ENCODE measurements at regions of chr19 and their contacts with region 1.

Region 1: GRCh38 chr19:18281082-18282020 is at the start of gene JUND:
- DNase-seq: no peak
- ATAC-seq: peak; percentile 86
- H3K4me3 ChIP-seq: peak within 1 kb of the TSS; percentile 74 to 91
- H3K27ac ChIP-seq: peak within 1 kb of the TSS; percentile 93
- H3K4me1 ChIP-seq: peaks cover 19% of the 10 kb centered on the region
- H3K27me3 ChIP-seq: no peaks in the 10 kb centered on the region
- CTCF ChIP-seq: no peak; the same call in 1 of the 2 replicates
- total RNA-seq, gene JUND: 130 TPM

Region 2: DNA sequence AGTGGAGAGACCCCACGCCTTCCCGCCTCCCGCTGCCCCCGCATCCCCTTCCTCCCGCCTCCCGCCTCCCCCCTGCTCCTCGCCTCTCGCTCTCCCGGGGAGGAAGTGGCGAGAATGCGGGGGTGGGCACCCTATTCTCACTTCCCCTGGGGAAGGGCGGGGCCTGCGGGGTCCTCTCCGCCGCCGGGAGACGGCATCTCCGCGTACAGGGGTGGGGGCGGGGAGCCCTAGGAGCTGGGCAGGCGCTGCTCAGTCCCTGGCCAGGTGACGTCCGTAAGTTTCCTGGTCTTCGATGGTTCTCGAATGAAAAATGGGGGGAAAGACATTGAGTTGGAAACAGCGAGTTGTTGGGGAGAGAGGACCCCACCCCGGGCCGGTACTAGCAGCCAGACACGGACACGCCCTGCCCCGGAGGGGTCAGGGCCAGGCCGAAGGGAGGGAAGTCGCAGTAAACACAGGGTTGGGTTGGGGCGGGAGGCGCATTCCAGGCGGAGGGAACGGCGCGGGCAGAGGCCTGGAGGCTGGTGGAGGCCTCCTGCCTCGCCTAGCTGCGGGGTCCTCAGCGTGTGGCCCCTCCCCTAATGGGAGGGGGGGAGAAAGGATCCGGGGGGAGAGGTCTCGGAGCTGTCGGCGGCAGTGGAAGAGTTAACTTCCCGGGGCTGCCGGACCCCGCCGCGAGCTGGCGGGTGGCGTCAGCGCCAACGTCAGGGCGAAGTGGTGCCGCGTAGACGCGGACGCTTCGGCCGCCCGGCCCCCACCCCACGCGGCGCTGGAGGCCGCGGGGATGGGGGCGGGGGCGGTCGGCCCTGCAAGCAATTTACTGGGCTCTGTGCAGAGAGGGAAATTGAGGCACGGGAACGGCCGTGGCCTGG is 10.5 kb after region 1 on chr19:
- CTCF ChIA-PET with region 1: no interaction called
- POLR2A ChIA-PET with region 1: interaction called, 22 read pairs
- in situ Hi-C with region 1: no loop called
- intact Hi-C with region 1: no loop called
- DNase-seq: no peak
- ATAC-seq: peak; percentile 86
- H3K4me3 ChIP-seq: peak overlapping the region; percentile 43 to 68
- H3K27ac ChIP-seq: peak overlapping the region; percentile 90
- H3K4me1 ChIP-seq: peaks cover 23% of the 10 kb centered on the region
- H3K27me3 ChIP-seq: no peaks in the 10 kb centered on the region
- CTCF ChIP-seq: no peak

Region 3: GRCh38 chr19:18322759-18323460 is 41.6 kb after region 1 on chr19 and contains the start of gene LSM4:
- CTCF ChIA-PET with region 1: interaction called, 11 read pairs
- POLR2A ChIA-PET with region 1: interaction called, 15 read pairs
- in situ Hi-C with region 1: no loop called
- intact Hi-C with region 1: loop called (anchors 2 kb)
- DNase-seq: peak; percentile 84
- ATAC-seq: peak; percentile 99
- H3K4me3 ChIP-seq: peak within 1 kb of the TSS; percentile 86 to 92
- H3K27ac ChIP-seq: peak within 1 kb of the TSS; percentile 98
- H3K4me1 ChIP-seq: peaks cover 25% of the 10 kb centered on the region
- H3K27me3 ChIP-seq: no peaks in the 10 kb centered on the region
- CTCF ChIP-seq: no peak
- total RNA-seq, gene LSM4: 209 TPM

Region 4: GRCh38 chr19:18328340-18329034 is 47.1 kb after region 1 on chr19:
- CTCF ChIA-PET with region 1: interaction called, 11 read pairs
- POLR2A ChIA-PET with region 1: interaction called, 15 read pairs
- in situ Hi-C with region 1: no loop called
- intact Hi-C with region 1: no loop called
- DNase-seq: peak; percentile 86
- ATAC-seq: peak; percentile 99
- H3K4me3 ChIP-seq: peak overlapping the region; percentile 31 to 51
- H3K27ac ChIP-seq: peak overlapping the region; percentile 84
- H3K4me1 ChIP-seq: peaks cover 12% of the 10 kb centered on the region
- H3K27me3 ChIP-seq: no peaks in the 10 kb centered on the region
- CTCF ChIP-seq: peak; percentile 91

Region 5: GRCh38 chr19:18408053-18408476 is 126.7 kb after region 1 on chr19:
- CTCF ChIA-PET with region 1: interaction called, 10 read pairs
- POLR2A ChIA-PET with region 1: no interaction called
- in situ Hi-C with region 1: no loop called
- intact Hi-C with region 1: no loop called
- DNase-seq: no peak
- ATAC-seq: no peak
- H3K4me3 ChIP-seq: no peak overlapping the region
- H3K27ac ChIP-seq: peak overlapping the region; percentile 29; the same call in 1 of the 2 replicates
- H3K4me1 ChIP-seq: no peaks in the 10 kb centered on the region
- H3K27me3 ChIP-seq: no peaks in the 10 kb centered on the region
- CTCF ChIP-seq: peak; percentile 68

Region 6: GRCh38 chr19:18417250-18418023 is 136.1 kb after region 1 on chr19:
- CTCF ChIA-PET with region 1: interaction called, 10 read pairs
- POLR2A ChIA-PET with region 1: interaction called, 13 read pairs
- in situ Hi-C with region 1: no loop called
- intact Hi-C with region 1: no loop called
- DNase-seq: no peak
- ATAC-seq: peak; percentile 55
- H3K4me3 ChIP-seq: peak overlapping the region; percentile 37 to 60
- H3K27ac ChIP-seq: peak overlapping the region; percentile 95
- H3K4me1 ChIP-seq: peaks cover 40% of the 10 kb centered on the region
- H3K27me3 ChIP-seq: no peaks in the 10 kb centered on the region
- CTCF ChIP-seq: no peak

Region 7: DNA sequence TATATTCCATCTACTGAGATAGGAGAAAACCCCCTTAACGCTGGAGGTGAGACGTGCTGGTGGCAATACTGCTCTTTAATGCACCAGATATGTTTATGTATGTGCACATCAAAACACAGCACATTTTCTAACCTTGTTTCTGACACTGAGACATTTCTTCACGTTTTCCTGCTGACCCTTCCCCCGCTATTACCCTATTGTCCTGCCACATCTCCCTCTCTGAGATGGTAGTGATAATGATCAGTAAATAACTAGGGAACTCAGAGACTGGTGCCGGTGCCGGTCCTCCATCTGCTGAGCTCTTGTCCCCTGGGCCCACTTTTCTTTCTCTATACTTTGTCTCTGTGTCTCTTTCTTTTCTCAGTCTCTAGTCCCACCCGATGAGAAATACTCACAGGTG is 1801.5 kb after region 1 on chr19:
- CTCF ChIA-PET with region 1: no interaction called
- POLR2A ChIA-PET with region 1: no interaction called
- in situ Hi-C with region 1: no loop called
- intact Hi-C with region 1: no loop called
- DNase-seq: no peak
- ATAC-seq: no peak
- H3K4me3 ChIP-seq: no peak overlapping the region
- H3K27ac ChIP-seq: no peak overlapping the region
- H3K4me1 ChIP-seq: peaks cover 3% of the 10 kb centered on the region; the same call in 1 of the 2 replicates
- H3K27me3 ChIP-seq: no peaks in the 10 kb centered on the region
- CTCF ChIP-seq: no peak

Measured in Panc1 (cell line).